ENCODE measurements at regions of chr11 and their contacts with region 1.

Region 1: GRCh38 chr11:95487938-95488337 is 256.9 kb upstream of the SESN3 start:
- DNase-seq: no peak
- ATAC-seq: no peak
- H3K4me3 ChIP-seq: no peak overlapping the region
- H3K27ac ChIP-seq: no peak overlapping the region
- H3K4me1 ChIP-seq: no peaks in the 10 kb centered on the region
- H3K27me3 ChIP-seq: no peaks in the 10 kb centered on the region
- CTCF ChIP-seq: no peak
- POLR2A ChIP-seq: no peak

Region 2: GRCh38 chr11:95559899-95560298 is 72.0 kb after region 1 on chr11:
- in situ Hi-C with region 1: no loop called
- intact Hi-C with region 1: loop called (anchors 2 kb)
- DNase-seq: no peak
- ATAC-seq: no peak
- H3K4me3 ChIP-seq: no peak overlapping the region
- H3K27ac ChIP-seq: no peak overlapping the region
- H3K4me1 ChIP-seq: no peaks in the 10 kb centered on the region
- H3K27me3 ChIP-seq: no peaks in the 10 kb centered on the region
- CTCF ChIP-seq: no peak
- POLR2A ChIP-seq: no peak

Measured in gastrocnemius medialis (tissue), 4 donors.